Panc1 (cell line): ENCODE measurements at regions of chr11 and their contacts with region 1.

Region 1: GRCh38 chr11:34492806-34493414 is 20.7 kb downstream of the ELF5 start:
- DNase-seq: peak; percentile 52
- ATAC-seq: peak; percentile 66; the same call in 1 of the 2 replicates
- H3K4me3 ChIP-seq: no peak overlapping the region
- H3K27ac ChIP-seq: no peak overlapping the region; the same call in 1 of the 2 replicates
- H3K4me1 ChIP-seq: no peaks in the 10 kb centered on the region; the same call in 1 of the 2 replicates
- H3K27me3 ChIP-seq: no peaks in the 10 kb centered on the region
- CTCF ChIP-seq: peak; percentile 78

Region 2: DNA sequence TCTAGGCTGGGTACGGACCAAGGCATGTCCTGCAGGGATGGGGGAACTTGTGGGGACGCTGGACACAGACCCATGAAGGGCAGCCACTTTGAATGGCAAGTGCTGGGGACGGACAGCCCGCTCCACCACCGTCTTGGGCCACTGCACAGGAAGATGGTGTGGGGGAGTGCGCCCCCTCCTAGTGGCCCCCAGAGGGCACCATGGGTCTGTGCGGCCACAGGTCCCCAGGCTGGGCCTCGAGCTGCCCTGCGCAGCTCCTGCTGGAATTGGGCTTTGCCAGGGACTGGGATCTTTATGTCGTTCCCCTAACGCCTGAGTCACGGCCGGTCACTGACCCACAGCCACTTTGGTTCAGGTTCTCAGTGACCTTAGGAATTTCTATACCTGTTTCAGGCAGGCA is 343.1 kb before region 1 on chr11:
- CTCF ChIA-PET with region 1: no interaction called
- POLR2A ChIA-PET with region 1: no interaction called
- in situ Hi-C with region 1: no loop called
- intact Hi-C with region 1: loop called (anchors 10 kb)
- DNase-seq: no peak
- ATAC-seq: peak; percentile 62
- H3K4me3 ChIP-seq: no peak overlapping the region
- H3K27ac ChIP-seq: no peak overlapping the region
- H3K4me1 ChIP-seq: peaks cover 25% of the 10 kb centered on the region
- H3K27me3 ChIP-seq: no peaks in the 10 kb centered on the region
- CTCF ChIP-seq: no peak; the same call in 1 of the 2 replicates

Region 3: DNA sequence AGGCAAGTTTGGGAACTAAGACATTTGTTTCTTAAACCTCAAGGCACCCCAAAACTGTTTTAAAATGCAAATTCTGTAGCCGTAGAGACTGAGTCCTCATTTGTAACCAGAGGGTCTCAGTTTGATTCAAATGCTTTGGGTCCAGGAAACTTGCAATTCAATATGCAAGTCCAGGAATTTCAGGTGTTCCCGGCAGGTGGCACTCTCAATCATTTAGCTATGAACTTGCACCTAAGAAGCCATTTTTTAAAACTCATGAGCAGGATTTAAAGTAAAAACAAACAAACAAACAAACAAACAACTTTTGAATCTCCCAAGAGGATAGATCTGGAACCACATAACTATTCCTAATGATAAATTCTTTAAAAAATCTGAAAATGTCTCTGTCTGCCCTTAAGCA is 126.4 kb before region 1 on chr11:
- CTCF ChIA-PET with region 1: interaction called, 9 read pairs
- POLR2A ChIA-PET with region 1: no interaction called
- in situ Hi-C with region 1: no loop called
- intact Hi-C with region 1: loop called (anchors 2 kb)
- DNase-seq: no peak
- ATAC-seq: no peak
- H3K4me3 ChIP-seq: no peak overlapping the region
- H3K27ac ChIP-seq: 0 out of 2 replicates have a peak overlapping the region, but pooled peaks have one; percentile 40
- H3K4me1 ChIP-seq: peaks cover 14% of the 10 kb centered on the region; the same call in 1 of the 2 replicates
- H3K27me3 ChIP-seq: no peaks in the 10 kb centered on the region
- CTCF ChIP-seq: peak; percentile 76

Region 4: GRCh38 chr11:34379079-34379478 is 113.8 kb before region 1 on chr11:
- CTCF ChIA-PET with region 1: interaction called, 16 read pairs
- POLR2A ChIA-PET with region 1: no interaction called
- in situ Hi-C with region 1: no loop called
- intact Hi-C with region 1: no loop called
- DNase-seq: no peak
- ATAC-seq: peak; percentile 93
- H3K4me3 ChIP-seq: no peak overlapping the region; a peak in 1 of 4 replicates
- H3K27ac ChIP-seq: peak overlapping the region; percentile 79
- H3K4me1 ChIP-seq: peaks cover 16% of the 10 kb centered on the region
- H3K27me3 ChIP-seq: no peaks in the 10 kb centered on the region
- CTCF ChIP-seq: no peak

Region 5: GRCh38 chr11:34899633-34900016 is 406.7 kb after region 1 on chr11:
- CTCF ChIA-PET with region 1: interaction called, 3 read pairs
- POLR2A ChIA-PET with region 1: no interaction called
- in situ Hi-C with region 1: no loop called
- intact Hi-C with region 1: loop called (anchors 5 kb)
- DNase-seq: no peak
- ATAC-seq: peak; percentile 47; the same call in 1 of the 2 replicates
- H3K4me3 ChIP-seq: no peak overlapping the region
- H3K27ac ChIP-seq: peak overlapping the region; percentile 76
- H3K4me1 ChIP-seq: peaks cover 14% of the 10 kb centered on the region
- H3K27me3 ChIP-seq: no peaks in the 10 kb centered on the region
- CTCF ChIP-seq: no peak